ENCODE measurements at regions of chr16 and their contacts with region 1.

Region 1: DNA sequence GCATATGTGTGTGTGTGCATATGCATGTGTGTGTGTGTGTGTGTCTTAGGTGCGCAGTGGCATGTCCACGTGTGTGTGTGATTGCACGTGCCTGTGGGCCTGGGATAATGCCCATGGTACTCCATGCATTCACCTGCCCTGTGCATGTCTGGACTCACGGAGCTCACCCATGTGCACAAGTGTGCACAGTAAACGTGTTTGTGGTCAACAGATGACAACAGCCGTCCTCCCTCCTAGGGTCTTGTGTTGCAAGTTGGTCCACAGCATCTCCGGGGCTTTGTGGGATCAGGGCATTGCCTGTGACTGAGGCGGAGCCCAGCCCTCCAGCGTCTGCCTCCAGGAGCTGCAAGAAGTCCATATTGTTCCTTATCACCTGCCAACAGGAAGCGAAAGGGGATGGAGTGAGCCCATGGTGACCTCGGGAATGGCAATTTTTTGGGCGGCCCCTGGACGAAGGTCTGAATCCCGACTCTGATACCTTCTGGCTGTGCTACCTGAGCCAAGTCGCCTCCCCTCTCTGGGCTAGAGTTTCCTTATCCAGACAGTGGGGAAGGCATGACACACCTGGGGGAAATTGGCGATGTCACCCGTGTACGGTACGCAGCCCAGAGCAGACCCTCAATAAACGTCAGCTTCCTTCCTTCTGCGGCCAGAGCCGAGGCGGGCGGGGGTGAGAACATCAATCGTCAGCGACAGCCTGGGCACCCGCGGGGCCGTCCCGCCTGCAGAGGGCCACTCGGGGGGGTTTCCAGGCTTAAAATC is 47.6 kb downstream of the IL21R start:
- DNase-seq: peak; percentile 90
- H3K4me3 ChIP-seq: peak overlapping the region in 1 of 8 donors; percentile 46
- H3K27ac ChIP-seq: peak overlapping the region in 6 of 8 donors; percentile 36 to 86 (median 63)
- H3K4me1 ChIP-seq: peaks cover 15 to 69% (median 48%) of the 10 kb centered on the region in 6 donors
- H3K27me3 ChIP-seq: peaks cover 0 to 32% (median 10%) of the 10 kb centered on the region in 7 donors
- CTCF ChIP-seq: no peak
- POLR2A ChIP-seq: no peak

Region 2: GRCh38 chr16:27374804-27375425 is 74.7 kb before region 1 on chr16:
- intact Hi-C with region 1: loop called (anchors 10 kb)
- DNase-seq: peak; percentile 82
- H3K4me3 ChIP-seq: peak overlapping the region in 2 of 8 donors; percentile 6 to 38
- H3K27ac ChIP-seq: peak overlapping the region in 7 of 8 donors; percentile 65 to 83 (median 73)
- H3K4me1 ChIP-seq: peaks cover 37 to 81% (median 56%) of the 10 kb centered on the region in 6 donors
- H3K27me3 ChIP-seq: no peaks in the 10 kb centered on the region
- CTCF ChIP-seq: peak in 10 of 11 experiments; percentile 27 to 65 (median 51)
- POLR2A ChIP-seq: no peak

Measured in spleen (tissue), 13 donors.